ENCODE measurements at regions of chr11 and their contacts with region 1.

Region 1: GRCh38 chr11:102495161-102496042 is 35.1 kb downstream of the MMP7 start:
- DNase-seq: no peak
- H3K4me3 ChIP-seq: no peak overlapping the region
- H3K27ac ChIP-seq: no peak overlapping the region
- H3K4me1 ChIP-seq: peaks cover 0 to 30% (median 4%) of the 10 kb centered on the region in 3 donors
- H3K27me3 ChIP-seq: peaks cover 0 to 6% (median 0%) of the 10 kb centered on the region in 4 donors
- CTCF ChIP-seq: peak; percentile 54 to 81 (median 72)
- POLR2A ChIP-seq: no peak

Region 2: DNA sequence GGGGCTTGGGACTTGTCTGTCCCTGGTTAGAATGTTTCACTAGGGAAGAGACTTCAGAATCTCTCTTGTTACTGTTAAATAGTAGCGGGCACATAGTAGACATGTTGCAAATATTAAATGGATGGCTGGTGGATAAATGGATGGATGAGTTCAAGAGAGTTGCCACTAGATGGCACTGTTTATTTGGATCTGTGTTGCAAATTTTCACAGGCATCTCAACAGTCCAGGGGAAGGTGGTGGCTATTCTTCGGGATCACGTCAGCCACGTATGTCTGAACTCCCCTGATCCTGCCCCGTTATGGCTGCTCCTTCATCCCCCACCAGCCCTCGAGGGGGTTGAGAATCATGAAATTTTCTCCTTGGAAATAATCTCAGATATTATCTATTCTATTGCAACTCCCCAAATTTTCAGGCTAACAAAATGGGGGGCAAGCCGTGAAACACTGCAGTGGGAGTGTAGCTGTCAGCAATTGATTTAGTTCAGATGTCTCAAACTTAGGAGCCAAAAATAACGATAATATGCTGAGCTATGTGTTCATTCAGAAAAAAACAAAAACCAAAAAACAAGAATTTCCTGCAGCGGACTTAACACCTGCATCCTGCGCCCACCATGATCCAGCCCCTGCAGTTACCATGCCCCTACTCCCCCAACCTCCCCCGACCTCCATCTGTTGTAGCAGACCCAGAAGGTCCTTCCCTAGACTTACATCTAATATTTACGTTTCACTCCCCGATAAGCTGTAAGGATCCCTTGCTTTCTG is 207.3 kb before region 1 on chr11:
- intact Hi-C with region 1: loop called (anchors 5 kb)
- DNase-seq: no peak
- H3K4me3 ChIP-seq: peak overlapping the region in 2 of 4 donors; percentile 19 to 48
- H3K27ac ChIP-seq: no peak overlapping the region
- H3K4me1 ChIP-seq: peaks cover 5 to 28% (median 13%) of the 10 kb centered on the region in 3 donors
- H3K27me3 ChIP-seq: no peaks in the 10 kb centered on the region
- CTCF ChIP-seq: peak; percentile 65 to 84 (median 75)
- POLR2A ChIP-seq: no peak

Region 3: GRCh38 chr11:102384419-102385079 is 110.9 kb before region 1 on chr11:
- intact Hi-C with region 1: loop called (anchors 10 kb)
- DNase-seq: no peak
- H3K4me3 ChIP-seq: no peak overlapping the region
- H3K27ac ChIP-seq: no peak overlapping the region
- H3K4me1 ChIP-seq: no peaks in the 10 kb centered on the region
- H3K27me3 ChIP-seq: no peaks in the 10 kb centered on the region
- CTCF ChIP-seq: no peak
- POLR2A ChIP-seq: no peak

Region 4: GRCh38 chr11:102451681-102452460 is 43.5 kb before region 1 on chr11:
- intact Hi-C with region 1: loop called (anchors 5 kb)
- DNase-seq: no peak
- H3K4me3 ChIP-seq: peak overlapping the region; percentile 90 to 96 (median 94)
- H3K27ac ChIP-seq: peak overlapping the region; percentile 94 to 95 (median 94)
- H3K4me1 ChIP-seq: peaks cover 37 to 84% (median 39%) of the 10 kb centered on the region in 3 donors
- H3K27me3 ChIP-seq: no peaks in the 10 kb centered on the region
- CTCF ChIP-seq: peak in 3 of 6 experiments; percentile 7 to 31 (median 12)
- POLR2A ChIP-seq: peak in 1 of 4 donors; percentile 54